ENCODE measurements at regions of chr3 and their contacts with region 1.

Region 1: DNA sequence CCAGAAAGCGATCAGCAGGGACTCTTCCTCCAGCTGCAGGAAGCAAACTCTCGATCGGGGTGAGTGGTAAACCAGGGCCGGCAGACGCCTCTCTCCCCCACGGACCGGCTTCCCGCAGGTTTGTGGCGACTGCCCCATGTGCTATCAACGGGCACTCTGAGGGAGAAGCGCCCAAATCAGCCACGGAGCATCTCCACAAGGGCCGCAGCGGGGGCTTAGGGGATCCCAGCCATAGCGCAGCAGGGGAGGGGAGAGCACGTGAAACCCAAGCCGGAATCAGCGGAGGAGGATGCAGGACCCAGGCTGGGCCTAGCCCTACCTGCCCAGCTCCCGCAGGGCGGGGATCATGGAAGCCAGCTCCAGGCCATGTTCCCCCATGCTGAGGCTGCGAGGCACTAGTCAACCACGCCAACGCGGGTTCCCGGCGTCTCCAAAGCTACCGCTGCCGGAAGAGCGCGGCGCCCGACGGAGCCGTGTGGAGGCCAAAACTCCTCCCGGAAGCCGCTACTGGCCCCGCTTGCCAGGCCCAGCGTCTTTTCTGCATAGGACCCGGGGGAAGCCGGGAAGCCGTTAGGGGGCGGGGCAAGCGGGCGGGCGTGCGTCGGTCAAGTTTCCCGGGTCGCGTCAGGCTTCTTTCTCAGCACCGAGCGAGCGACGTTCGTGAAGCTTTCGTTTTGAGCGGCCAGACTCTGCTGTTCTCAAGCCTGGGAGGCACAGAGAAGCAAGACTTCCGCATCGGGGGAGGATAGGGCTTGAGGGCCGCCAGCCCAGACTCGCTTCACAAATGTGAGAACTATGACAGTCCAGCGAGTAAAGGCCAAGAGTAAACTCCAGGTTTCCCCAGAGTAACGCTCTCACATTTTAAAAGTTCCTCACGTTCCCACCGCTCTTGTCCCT is at the start of gene ATR:
- DNase-seq: peak; percentile 92 to 97
- ATAC-seq: peak; percentile 90 to 98 (median 91)
- H3K4me3 ChIP-seq: peak within 1 kb of the TSS; percentile 98
- H3K4me3 Mint-ChIP-seq: peak within 1 kb of the TSS; percentile 96
- H3K27ac ChIP-seq: peak within 1 kb of the TSS; percentile 93
- H3K27ac Mint-ChIP-seq: peak within 1 kb of the TSS; percentile 94 to 97
- H3K4me1 ChIP-seq: peaks cover 17% of the 10 kb centered on the region
- H3K4me1 Mint-ChIP-seq: peaks cover 47 to 55% of the 10 kb centered on the region in 2 donors
- H3K27me3 ChIP-seq: no peaks in the 10 kb centered on the region
- H3K27me3 Mint-ChIP-seq: peaks cover 5 to 9% of the 10 kb centered on the region in 2 donors
- CTCF ChIP-seq: no peak
- total RNA-seq, gene ATR: 39.9 to 47.9 (median 45.8) TPM

Region 2: GRCh38 chr3:142447852-142448823 is 130.4 kb before region 1 on chr3 and contains the start of gene XRN1:
- intact Hi-C with region 1: loop called (anchors 2 kb)
- DNase-seq: peak; percentile 96 to 97
- ATAC-seq: peak; percentile 94 to 99 (median 96)
- H3K4me3 ChIP-seq: peak within 1 kb of the TSS; percentile 96
- H3K4me3 Mint-ChIP-seq: peak within 1 kb of the TSS; percentile 100
- H3K27ac ChIP-seq: peak within 1 kb of the TSS; percentile 97
- H3K27ac Mint-ChIP-seq: peak within 1 kb of the TSS; percentile 99 to 100
- H3K4me1 ChIP-seq: peaks cover 12% of the 10 kb centered on the region
- H3K4me1 Mint-ChIP-seq: peaks cover 45 to 46% of the 10 kb centered on the region in 2 donors
- H3K27me3 ChIP-seq: no peaks in the 10 kb centered on the region
- H3K27me3 Mint-ChIP-seq: no peaks in the 10 kb centered on the region
- CTCF ChIP-seq: no peak
- total RNA-seq, gene XRN1: 116 to 141 (median 128) TPM

Region 3: DNA sequence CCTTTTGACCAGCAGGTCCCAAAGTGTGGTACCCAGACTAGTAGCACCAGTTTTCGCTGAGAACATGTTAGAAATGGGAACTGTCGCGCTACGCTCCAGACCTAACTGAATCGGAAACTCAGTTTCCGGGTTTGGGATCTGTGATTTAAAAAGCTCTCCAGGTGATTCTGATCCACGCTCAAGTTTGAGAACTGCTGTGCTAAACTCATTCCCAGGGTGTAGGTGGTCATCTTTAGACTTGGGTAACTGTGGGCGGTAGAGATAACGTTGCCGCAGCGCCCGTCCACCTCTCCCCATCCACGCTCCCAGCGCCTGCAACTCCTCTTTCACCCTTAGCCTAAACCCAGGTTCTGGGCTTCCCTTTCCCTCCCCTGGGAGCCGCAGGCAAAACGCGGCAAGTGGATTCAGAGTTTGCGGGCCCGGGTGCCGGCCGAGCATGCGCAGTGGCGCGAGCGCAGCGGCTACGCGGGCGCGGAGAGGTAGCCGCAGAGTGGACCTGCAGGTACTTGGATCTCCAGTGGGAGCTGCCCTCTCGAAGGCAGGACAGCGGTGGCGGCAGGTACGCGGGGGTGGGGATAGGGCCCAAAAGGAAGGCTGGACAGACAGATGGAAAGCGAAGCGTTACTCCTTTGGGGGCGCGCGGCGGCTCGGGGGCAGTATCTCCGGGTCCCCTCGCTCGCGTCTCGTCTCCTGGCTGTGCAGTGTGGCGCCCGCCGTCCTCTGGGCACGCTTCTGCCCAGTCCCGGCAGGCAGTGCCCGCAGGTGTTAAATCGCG is 17.6 kb after region 1 on chr3 and contains the start of gene PLS1:
- intact Hi-C with region 1: loop called (anchors 1 kb)
- DNase-seq: peak; percentile 87 to 90
- ATAC-seq: peak; percentile 86 to 91 (median 90)
- H3K4me3 ChIP-seq: peak within 1 kb of the TSS; percentile 77
- H3K4me3 Mint-ChIP-seq: peak within 1 kb of the TSS; percentile 99
- H3K27ac ChIP-seq: peak within 1 kb of the TSS; percentile 57
- H3K27ac Mint-ChIP-seq: peak within 1 kb of the TSS; percentile 60 to 95
- H3K4me1 ChIP-seq: peaks cover 6% of the 10 kb centered on the region
- H3K4me1 Mint-ChIP-seq: peaks cover 7 to 15% of the 10 kb centered on the region in 2 donors
- H3K27me3 ChIP-seq: no peaks in the 10 kb centered on the region
- H3K27me3 Mint-ChIP-seq: peaks cover 3 to 8% of the 10 kb centered on the region in 2 donors
- CTCF ChIP-seq: no peak
- total RNA-seq, gene PLS1: 1.2 to 2.6 (median 1.6) TPM

Region 4: DNA sequence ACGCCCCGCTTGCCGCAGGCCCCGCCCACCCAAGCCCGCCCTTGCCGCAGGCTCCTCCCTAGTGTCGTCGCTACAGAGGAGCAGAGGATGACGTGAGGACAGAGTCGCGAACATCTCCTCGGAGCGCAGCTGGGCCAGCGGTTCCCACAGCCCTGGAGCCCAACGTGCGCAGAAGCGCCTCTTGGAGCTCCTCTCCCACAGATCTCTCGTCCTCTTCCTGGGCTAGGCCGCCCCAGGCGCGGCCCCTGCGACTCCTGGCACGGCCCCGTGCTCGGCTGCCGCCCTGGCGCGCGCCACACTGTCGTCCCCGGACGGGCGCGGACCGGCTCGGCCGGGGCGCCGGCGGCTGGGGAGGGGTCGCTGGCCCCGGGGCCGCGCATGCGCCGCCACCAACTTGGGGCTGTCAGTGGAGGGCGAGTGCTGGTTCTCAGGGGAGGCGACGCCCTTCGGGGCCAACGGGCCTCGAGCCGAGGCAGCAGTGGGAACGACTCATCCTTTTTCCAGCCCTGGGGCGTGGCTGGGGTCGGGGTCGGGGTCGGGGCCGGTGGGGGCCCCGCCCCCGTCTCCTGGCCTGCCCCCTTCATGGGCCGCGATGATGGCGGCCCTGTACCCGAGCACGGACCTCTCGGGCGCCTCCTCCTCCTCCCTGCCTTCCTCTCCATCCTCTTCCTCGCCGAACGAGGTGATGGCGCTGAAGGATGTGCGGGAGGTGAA is 145.6 kb after region 1 on chr3 and contains the start of gene TRPC1:
- intact Hi-C with region 1: loop called (anchors 1 kb)
- DNase-seq: peak; percentile 52 to 94
- ATAC-seq: peak; percentile 92 to 95 (median 94)
- H3K4me3 ChIP-seq: peak within 1 kb of the TSS; percentile 50
- H3K4me3 Mint-ChIP-seq: peak within 1 kb of the TSS; percentile 89
- H3K27ac ChIP-seq: no peak within 1 kb of the TSS
- H3K27ac Mint-ChIP-seq: peak within 1 kb of the TSS in 1 of 2 donors; percentile 70
- H3K4me1 ChIP-seq: peaks cover 7% of the 10 kb centered on the region
- H3K4me1 Mint-ChIP-seq: peaks cover 0 to 8% of the 10 kb centered on the region in 2 donors
- H3K27me3 ChIP-seq: peaks cover 20% of the 10 kb centered on the region
- H3K27me3 Mint-ChIP-seq: peaks cover 41 to 60% of the 10 kb centered on the region in 2 donors
- CTCF ChIP-seq: no peak
- total RNA-seq, gene TRPC1: 0.21 to 1.4 (median 0.43) TPM

Region 5: DNA sequence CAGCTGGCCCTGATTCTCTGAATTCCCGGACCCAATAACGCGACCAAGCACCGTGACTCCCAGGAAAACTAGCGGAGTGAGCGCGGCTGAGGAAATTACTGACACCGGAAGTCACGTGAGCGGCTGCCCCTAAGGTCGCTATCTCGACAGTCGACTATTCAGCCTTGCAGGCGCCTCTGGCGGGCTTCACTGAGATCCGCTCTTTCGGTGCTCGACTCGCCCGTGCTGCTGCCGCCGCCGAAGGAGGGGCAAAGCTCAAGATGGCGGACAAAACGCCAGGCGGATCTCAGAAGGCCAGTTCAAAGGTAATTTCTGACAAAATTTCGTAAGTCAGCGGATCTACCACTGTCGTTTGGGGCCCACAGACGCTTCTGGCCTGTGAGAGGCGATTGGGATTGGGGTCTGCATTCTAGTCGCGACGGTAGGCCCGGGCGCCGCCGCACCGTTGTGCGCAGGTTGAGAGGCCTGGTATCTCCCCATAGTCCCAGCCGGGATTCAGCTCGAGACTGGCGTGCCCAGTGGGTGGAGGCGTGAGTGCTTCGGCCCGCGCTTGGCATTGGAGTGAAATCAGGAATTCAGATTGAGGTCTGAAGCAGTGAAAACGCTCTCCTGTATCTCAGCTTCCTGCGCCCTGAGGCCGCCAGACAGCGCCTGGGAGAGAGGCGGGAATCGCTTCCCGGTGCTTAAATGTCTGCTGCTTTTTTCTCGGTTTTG is 423.0 kb after region 1 on chr3 and contains the start of gene U2SURP:
- intact Hi-C with region 1: loop called (anchors 5 kb)
- DNase-seq: peak; percentile 84 to 96
- ATAC-seq: peak; percentile 94 to 99 (median 97)
- H3K4me3 ChIP-seq: peak within 1 kb of the TSS; percentile 80
- H3K4me3 Mint-ChIP-seq: peak within 1 kb of the TSS; percentile 99
- H3K27ac ChIP-seq: peak within 1 kb of the TSS; percentile 90
- H3K27ac Mint-ChIP-seq: peak within 1 kb of the TSS; percentile 99 to 100
- H3K4me1 ChIP-seq: peaks cover 13% of the 10 kb centered on the region
- H3K4me1 Mint-ChIP-seq: peaks cover 41 to 45% of the 10 kb centered on the region in 2 donors
- H3K27me3 ChIP-seq: no peaks in the 10 kb centered on the region
- H3K27me3 Mint-ChIP-seq: peaks cover 3 to 7% of the 10 kb centered on the region in 2 donors
- CTCF ChIP-seq: no peak
- total RNA-seq, gene U2SURP: 165 to 179 (median 172) TPM

Region 6: DNA sequence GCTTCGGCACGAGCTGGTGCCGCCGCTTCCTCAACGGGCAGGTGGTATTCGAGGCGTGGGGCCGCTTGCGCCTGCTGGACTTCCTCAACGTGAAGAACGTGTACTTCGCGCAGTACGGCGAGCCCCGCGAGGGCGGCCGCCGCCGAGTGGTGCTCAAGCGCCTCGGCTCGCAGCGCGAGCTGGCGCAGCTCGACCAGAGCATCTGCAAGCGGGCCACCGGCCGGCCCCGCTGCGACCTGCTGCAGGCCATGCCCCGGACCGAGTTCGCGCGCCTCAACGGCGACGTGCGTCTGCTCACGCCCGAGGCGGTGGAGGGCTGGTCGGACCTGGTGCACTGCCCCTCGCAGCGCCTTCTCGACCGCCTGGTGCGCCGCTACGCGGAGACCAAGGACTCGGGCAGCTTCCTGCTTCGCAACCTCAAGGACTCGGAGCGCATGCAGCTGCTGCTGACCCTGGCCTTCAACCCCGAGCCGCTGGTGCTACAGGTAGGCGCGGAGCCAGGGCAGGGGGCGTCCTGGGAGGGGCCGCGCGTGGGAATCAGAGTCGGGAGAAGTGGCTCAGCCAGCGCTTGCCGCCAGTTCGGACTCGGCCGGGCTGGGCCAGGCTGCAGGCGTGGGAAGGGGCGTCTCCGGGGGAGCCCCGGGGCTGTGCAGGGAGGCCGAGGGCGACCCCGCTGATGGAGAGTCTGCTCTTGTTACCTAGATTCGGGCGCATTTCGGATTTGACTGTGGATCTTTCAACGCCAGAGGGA is 1394.1 kb after region 1 on chr3:
- intact Hi-C with region 1: loop called (anchors 5 kb)
- DNase-seq: peak; percentile 59 to 91
- ATAC-seq: peak; percentile 10 to 47 (median 27)
- H3K4me3 ChIP-seq: peak overlapping the region; percentile 65
- H3K4me3 Mint-ChIP-seq: peak overlapping the region; percentile 89
- H3K27ac ChIP-seq: peak overlapping the region; percentile 90
- H3K27ac Mint-ChIP-seq: peak overlapping the region; percentile 82 to 94
- H3K4me1 ChIP-seq: peaks cover 9% of the 10 kb centered on the region
- H3K4me1 Mint-ChIP-seq: peaks cover 34 to 45% of the 10 kb centered on the region in 2 donors
- H3K27me3 ChIP-seq: no peaks in the 10 kb centered on the region
- H3K27me3 Mint-ChIP-seq: no peaks in the 10 kb centered on the region
- CTCF ChIP-seq: peak; percentile 32